Aorta (tissue), 5 donors: ENCODE measurements at regions of chr1 and their contacts with region 1.

Region 1: DNA sequence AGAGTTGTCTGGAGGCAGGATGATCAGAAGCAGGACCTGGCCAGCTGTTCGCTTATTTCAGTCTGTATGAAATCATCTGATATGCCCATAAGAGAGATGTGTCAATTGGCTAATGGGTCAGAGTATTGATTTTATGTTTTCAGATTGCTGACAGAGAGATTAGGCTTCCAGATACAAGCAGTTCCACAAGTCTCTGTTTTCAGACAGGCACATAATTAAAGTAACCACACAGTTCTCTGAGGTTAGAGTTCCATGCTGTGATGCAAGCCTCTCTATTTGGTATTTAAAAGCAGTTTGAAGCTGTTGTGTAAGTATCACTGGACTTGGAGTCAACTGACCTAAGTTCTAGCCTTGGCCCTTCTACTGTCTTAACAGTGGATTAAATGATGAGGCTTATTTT is 50.1 kb downstream of the ATF6 start:
- DNase-seq: no peak
- ATAC-seq: no peak
- H3K4me3 ChIP-seq: no peak overlapping the region
- H3K27ac ChIP-seq: no peak overlapping the region
- H3K4me1 ChIP-seq: no peaks in the 10 kb centered on the region
- H3K27me3 ChIP-seq: no peaks in the 10 kb centered on the region

Region 2: GRCh38 chr1:161676958-161677689 is 139.1 kb before region 1 on chr1:
- intact Hi-C with region 1: no loop called
- DNase-seq: no peak
- ATAC-seq: no peak
- H3K4me3 ChIP-seq: no peak overlapping the region
- H3K27ac ChIP-seq: no peak overlapping the region
- H3K4me1 ChIP-seq: no peaks in the 10 kb centered on the region
- H3K27me3 ChIP-seq: no peaks in the 10 kb centered on the region

Region 3: GRCh38 chr1:161772397-161772796 is 43.8 kb before region 1 on chr1:
- intact Hi-C with region 1: no loop called
- DNase-seq: no peak
- ATAC-seq: no peak
- H3K4me3 ChIP-seq: no peak overlapping the region
- H3K27ac ChIP-seq: no peak overlapping the region
- H3K4me1 ChIP-seq: no peaks in the 10 kb centered on the region
- H3K27me3 ChIP-seq: no peaks in the 10 kb centered on the region

Region 4: DNA sequence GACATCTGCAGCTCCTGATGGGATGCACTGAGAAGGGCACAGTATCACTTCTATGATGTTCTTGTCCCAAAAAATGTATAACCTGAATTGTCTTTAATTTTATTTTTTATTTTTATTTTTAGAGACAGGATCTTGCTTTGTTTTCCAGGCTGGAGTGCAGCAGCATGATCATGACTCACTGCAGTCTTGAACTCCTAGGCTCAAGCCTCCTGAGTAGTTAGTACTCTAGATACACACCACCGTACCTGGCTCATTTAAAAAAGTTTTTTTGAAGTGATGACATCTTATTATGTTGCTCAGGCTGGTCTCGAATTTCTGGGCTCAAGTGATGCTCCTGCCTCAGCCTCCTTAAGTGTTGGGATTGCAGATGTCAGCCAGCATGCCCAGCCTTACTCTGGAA is 18.8 kb after region 1 on chr1:
- intact Hi-C with region 1: loop called in 1 of 2 experiments (anchors 2 kb)
- DNase-seq: no peak
- ATAC-seq: no peak
- H3K4me3 ChIP-seq: no peak overlapping the region
- H3K27ac ChIP-seq: no peak overlapping the region
- H3K4me1 ChIP-seq: no peaks in the 10 kb centered on the region
- H3K27me3 ChIP-seq: no peaks in the 10 kb centered on the region